WTC11 (cell line): ENCODE measurements at regions of chr5 and their contacts with region 1.

Region 1: GRCh38 chr5:1118231-1118698 is 6.4 kb upstream of the SLC12A7 start:
- DNase-seq: no peak
- ATAC-seq: no peak
- H3K4me3 Mint-ChIP-seq: no peak overlapping the region
- H3K27ac Mint-ChIP-seq: peak overlapping the region; percentile 89; the same call in 1 of the 2 replicates
- H3K4me1 Mint-ChIP-seq: peaks cover 8% of the 10 kb centered on the region
- H3K27me3 Mint-ChIP-seq: no peaks in the 10 kb centered on the region
- CTCF ChIP-seq: no peak

Region 2: GRCh38 chr5:1130218-1130946 is 12.1 kb after region 1 on chr5:
- CTCF ChIA-PET with region 1: interaction called, 13 read pairs
- POLR2A ChIA-PET with region 1: interaction called, 4 read pairs
- DNase-seq: peak; percentile 54
- ATAC-seq: peak; percentile 69
- H3K4me3 Mint-ChIP-seq: no peak overlapping the region
- H3K27ac Mint-ChIP-seq: no peak overlapping the region
- H3K4me1 Mint-ChIP-seq: peaks cover 5% of the 10 kb centered on the region
- H3K27me3 Mint-ChIP-seq: no peaks in the 10 kb centered on the region
- CTCF ChIP-seq: no peak